GM12878 (cell line): ENCODE measurements at regions of chr6 and their contacts with region 1.

Region 1: DNA sequence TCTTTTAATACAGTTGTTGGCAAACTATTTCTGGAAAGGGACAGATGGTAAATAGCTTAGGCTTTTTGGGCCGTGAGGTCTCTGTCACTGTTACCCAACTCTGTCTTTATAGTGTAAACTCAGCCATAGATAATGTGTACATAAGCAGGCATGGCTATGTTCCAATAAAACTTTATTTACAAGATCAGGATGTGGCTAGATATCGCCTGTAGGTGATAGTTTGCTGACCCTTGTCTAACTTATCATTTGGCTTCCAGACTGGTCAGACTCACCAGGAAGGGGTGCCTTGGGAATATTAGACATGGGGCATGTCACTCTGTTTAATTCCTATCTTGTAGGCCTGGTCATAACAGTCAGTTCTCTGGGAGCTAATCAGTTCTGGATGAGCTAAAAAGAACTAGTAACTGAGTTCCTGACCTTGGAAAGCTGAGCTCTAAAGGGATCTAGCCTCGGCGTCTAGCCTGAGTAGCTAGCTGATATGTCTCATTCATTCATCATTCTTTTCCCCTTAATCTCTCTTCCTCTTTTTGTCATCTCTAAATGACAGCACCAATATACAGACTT is 163.6 kb downstream of the SLC16A10 start:
- DNase-seq: no peak
- ATAC-seq: peak; percentile 84
- H3K4me3 ChIP-seq: no peak overlapping the region
- H3K27ac ChIP-seq: no peak overlapping the region
- H3K4me1 ChIP-seq: no peaks in the 10 kb centered on the region
- H3K27me3 ChIP-seq: no peaks in the 10 kb centered on the region
- CTCF ChIP-seq: no peak
- EP300 ChIP-seq: no peak
- POLR2A ChIP-seq: no peak
- RAD21 ChIP-seq: no peak

Region 2: DNA sequence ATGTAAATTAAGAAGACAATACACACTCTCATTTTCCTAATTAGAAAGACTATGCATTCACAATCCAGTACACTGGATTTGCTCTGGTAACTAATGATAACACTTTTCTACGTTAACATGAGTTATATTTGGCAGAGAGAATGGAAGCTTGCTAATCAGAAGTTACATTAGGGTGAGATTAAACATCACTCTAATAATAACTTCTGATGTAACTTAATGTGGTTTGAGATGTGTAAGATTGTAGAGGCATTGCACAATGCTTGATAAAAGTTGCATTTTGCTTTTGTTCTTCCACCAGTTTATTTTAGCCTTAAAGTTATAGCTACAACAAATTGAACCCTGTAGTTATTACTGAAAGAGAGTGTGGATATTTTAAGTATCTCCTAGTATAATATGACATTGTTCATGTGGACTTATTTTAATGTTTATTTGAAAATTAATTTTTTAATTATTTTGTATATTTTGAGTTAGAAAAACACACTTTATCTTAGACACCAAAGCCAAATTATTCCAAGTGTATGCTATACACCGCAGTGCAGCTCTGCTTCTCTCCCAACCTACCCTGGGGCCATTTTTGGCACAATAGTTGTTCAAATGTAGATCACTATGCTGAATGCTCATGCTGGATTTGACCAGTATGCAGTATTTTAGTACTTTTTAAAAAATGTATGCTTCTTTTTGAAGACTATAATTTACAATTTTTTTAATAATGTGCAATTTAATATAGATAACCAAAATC is 20.4 kb before region 1 on chr6:
- CTCF ChIA-PET with region 1: no interaction called
- POLR2A ChIA-PET with region 1: no interaction called
- RAD21 ChIA-PET with region 1: no interaction called
- SMC1A ChIA-PET with region 1: no interaction called
- in situ Hi-C with region 1: no loop called
- intact Hi-C with region 1: no loop called
- DNase-seq: no peak
- ATAC-seq: no peak
- H3K4me3 ChIP-seq: no peak overlapping the region
- H3K27ac ChIP-seq: no peak overlapping the region
- H3K4me1 ChIP-seq: no peaks in the 10 kb centered on the region
- H3K27me3 ChIP-seq: no peaks in the 10 kb centered on the region
- CTCF ChIP-seq: no peak
- EP300 ChIP-seq: no peak
- POLR2A ChIP-seq: no peak
- RAD21 ChIP-seq: no peak

Region 3: DNA sequence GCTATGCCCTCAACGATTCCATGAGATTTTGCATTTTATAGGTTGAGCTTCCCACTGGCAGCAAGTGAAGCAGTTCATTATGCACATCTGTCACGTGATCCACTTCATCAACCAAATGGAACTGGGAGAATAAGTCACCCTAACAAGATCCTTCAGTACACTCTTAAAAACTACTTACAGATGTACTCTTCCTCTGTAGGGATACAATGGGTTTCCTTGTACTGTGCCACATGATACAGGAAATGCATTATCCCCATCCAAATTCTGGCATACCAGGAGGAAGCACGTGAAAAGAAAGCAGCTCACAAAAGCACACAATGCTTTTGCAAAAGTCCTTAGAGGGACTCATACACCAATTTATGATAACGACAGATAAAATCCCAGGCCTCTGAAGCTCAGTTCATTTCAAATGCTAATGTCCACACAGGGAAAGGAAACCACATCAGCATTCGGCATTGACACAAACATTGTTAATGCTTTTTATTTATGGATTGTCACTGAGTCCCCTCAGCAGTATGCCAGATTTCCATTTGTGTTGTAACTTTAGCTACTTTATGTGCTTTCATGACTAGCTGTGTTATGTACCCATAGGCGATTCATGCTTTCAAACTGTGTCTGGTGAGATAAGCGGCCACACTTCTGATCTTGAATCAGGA is 290.3 kb after region 1 on chr6:
- CTCF ChIA-PET with region 1: no interaction called
- POLR2A ChIA-PET with region 1: no interaction called
- RAD21 ChIA-PET with region 1: no interaction called
- SMC1A ChIA-PET with region 1: no interaction called
- in situ Hi-C with region 1: no loop called
- intact Hi-C with region 1: no loop called
- DNase-seq: no peak
- ATAC-seq: no peak
- H3K4me3 ChIP-seq: no peak overlapping the region
- H3K27ac ChIP-seq: no peak overlapping the region
- H3K4me1 ChIP-seq: peaks cover 8% of the 10 kb centered on the region; the same call in 1 of the 2 replicates
- H3K27me3 ChIP-seq: no peaks in the 10 kb centered on the region
- CTCF ChIP-seq: no peak
- EP300 ChIP-seq: no peak
- POLR2A ChIP-seq: no peak
- RAD21 ChIP-seq: no peak

Region 4: DNA sequence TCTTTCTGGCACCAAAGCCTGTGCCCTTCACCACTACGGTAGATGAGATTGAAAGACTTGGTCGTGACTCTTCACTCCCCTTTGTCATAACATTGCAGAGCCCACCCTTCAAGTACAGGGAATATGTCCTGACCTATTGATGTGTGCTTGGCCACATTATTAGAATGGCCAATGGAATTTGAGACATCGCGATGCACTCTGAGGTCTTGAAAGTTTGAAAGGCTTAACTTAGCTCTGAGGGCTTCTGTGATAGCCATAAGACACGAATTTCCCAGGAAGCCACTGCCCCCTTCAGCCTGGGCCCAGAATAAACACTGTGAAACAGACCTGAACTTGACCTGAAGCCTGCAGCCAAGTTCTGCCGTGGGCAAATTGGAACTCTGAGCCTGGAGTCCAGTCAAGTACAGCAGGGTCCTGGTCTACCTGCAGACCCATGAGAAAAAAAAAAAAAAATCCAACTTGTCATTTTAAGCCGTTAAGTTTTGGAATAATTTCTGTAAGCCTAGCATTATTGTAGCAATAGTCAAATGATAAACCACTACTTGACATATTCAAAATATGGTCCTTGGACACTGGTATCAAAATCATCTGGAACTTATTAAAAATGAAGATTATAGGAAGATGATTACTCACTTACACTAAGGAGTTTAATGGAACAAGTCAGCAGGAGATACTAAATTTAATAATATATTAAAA is 391.7 kb after region 1 on chr6:
- CTCF ChIA-PET with region 1: interaction called, 7 read pairs
- POLR2A ChIA-PET with region 1: no interaction called
- RAD21 ChIA-PET with region 1: interaction called, 3 read pairs
- SMC1A ChIA-PET with region 1: no interaction called
- in situ Hi-C with region 1: loop called (anchors 5 kb)
- intact Hi-C with region 1: no loop called
- DNase-seq: peak; percentile 21
- ATAC-seq: peak; percentile 95
- H3K4me3 ChIP-seq: no peak overlapping the region
- H3K27ac ChIP-seq: no peak overlapping the region
- H3K4me1 ChIP-seq: no peaks in the 10 kb centered on the region
- H3K27me3 ChIP-seq: no peaks in the 10 kb centered on the region
- CTCF ChIP-seq: peak; percentile 57 to 77 (median 65)
- EP300 ChIP-seq: no peak
- POLR2A ChIP-seq: no peak
- RAD21 ChIP-seq: peak; percentile 75